IMR-90 (cell line): ENCODE measurements at regions of chr9 and their contacts with region 1.

Region 1: GRCh38 chr9:94922098-94922607 is 195.7 kb downstream of the AOPEP start:
- DNase-seq: peak; percentile 98
- ATAC-seq: peak; percentile 71
- H3K4me3 ChIP-seq: no peak overlapping the region
- H3K27ac ChIP-seq: peak overlapping the region; percentile 97
- H3K4me1 ChIP-seq: peaks cover 30% of the 10 kb centered on the region
- H3K27me3 ChIP-seq: no peaks in the 10 kb centered on the region
- CTCF ChIP-seq: no peak
- POLR2A ChIP-seq: no peak; the same call in 1 of the 2 replicates
- RAD21 ChIP-seq: peak; percentile 40

Region 2: GRCh38 chr9:94783102-94783664 is 139.0 kb before region 1 on chr9:
- CTCF ChIA-PET with region 1: interaction called, 3 read pairs
- POLR2A ChIA-PET with region 1: interaction called, 3 read pairs
- dilution Hi-C with region 1: no loop called
- in situ Hi-C with region 1: no loop called
- intact Hi-C with region 1: loop called (anchors 2 kb)
- DNase-seq: peak; percentile 87
- ATAC-seq: peak; percentile 92
- H3K4me3 ChIP-seq: no peak overlapping the region
- H3K27ac ChIP-seq: peak overlapping the region; percentile 67
- H3K4me1 ChIP-seq: peaks cover 9% of the 10 kb centered on the region
- H3K27me3 ChIP-seq: no peaks in the 10 kb centered on the region
- CTCF ChIP-seq: peak; percentile 77
- POLR2A ChIP-seq: peak; percentile 54; the same call in 1 of the 2 replicates
- RAD21 ChIP-seq: peak; percentile 90

Region 3: DNA sequence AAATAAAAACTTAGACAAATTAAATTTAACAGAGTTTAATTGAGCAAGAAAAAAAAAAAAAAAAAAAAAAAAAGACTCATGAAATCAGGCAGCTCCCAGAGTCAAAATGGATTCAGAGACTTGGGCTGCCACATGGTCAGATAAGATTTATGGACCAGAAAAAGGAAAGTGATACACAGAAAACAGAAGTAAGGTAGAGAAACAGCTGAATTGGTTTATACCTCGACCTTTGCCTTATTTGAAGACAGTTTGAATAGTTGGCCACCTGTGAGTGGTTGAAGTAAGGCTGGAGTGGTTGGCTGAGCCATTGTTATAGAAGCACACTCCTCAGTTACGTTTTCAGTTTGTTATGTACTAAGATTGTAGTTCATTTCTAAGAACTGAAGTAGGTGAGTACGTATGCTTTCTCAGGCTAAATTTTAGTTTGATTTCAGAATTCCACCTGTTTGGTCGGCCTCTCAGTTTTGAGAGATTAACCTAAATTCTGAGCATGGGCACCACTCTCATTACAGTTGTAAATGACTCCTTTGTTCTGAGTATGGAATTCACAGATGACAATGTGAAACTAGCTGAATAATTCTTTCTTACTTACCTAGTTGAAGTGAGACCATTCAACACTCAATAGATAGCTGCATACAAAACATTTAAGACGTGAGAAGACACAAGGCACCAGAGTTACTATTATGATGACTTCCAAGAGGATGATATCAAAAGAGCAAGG is 46.7 kb before region 1 on chr9:
- CTCF ChIA-PET with region 1: interaction called, 3 read pairs
- POLR2A ChIA-PET with region 1: interaction called, 13 read pairs
- dilution Hi-C with region 1: no loop called
- in situ Hi-C with region 1: no loop called
- intact Hi-C with region 1: no loop called
- DNase-seq: no peak
- ATAC-seq: no peak
- H3K4me3 ChIP-seq: no peak overlapping the region
- H3K27ac ChIP-seq: no peak overlapping the region
- H3K4me1 ChIP-seq: no peaks in the 10 kb centered on the region; the same call in 1 of the 2 replicates
- H3K27me3 ChIP-seq: no peaks in the 10 kb centered on the region
- CTCF ChIP-seq: no peak
- POLR2A ChIP-seq: no peak
- RAD21 ChIP-seq: no peak

Region 4: GRCh38 chr9:94945197-94946144 is 23.3 kb after region 1 on chr9:
- CTCF ChIA-PET with region 1: no interaction called
- POLR2A ChIA-PET with region 1: no interaction called
- dilution Hi-C with region 1: no loop called
- in situ Hi-C with region 1: no loop called
- intact Hi-C with region 1: loop called (anchors 2 kb)
- DNase-seq: peak; percentile 96
- ATAC-seq: peak; percentile 84
- H3K4me3 ChIP-seq: no peak overlapping the region
- H3K27ac ChIP-seq: peak overlapping the region; percentile 73
- H3K4me1 ChIP-seq: peaks cover 22% of the 10 kb centered on the region
- H3K27me3 ChIP-seq: no peaks in the 10 kb centered on the region
- CTCF ChIP-seq: no peak
- POLR2A ChIP-seq: no peak
- RAD21 ChIP-seq: no peak; the same call in 1 of the 2 replicates

Region 5: GRCh38 chr9:95004411-95005277 is 82.5 kb after region 1 on chr9:
- CTCF ChIA-PET with region 1: no interaction called
- POLR2A ChIA-PET with region 1: interaction called, 7 read pairs
- dilution Hi-C with region 1: no loop called
- in situ Hi-C with region 1: no loop called
- intact Hi-C with region 1: loop called (anchors 1 kb)
- DNase-seq: no peak
- ATAC-seq: peak; percentile 70
- H3K4me3 ChIP-seq: peak overlapping the region; percentile 92
- H3K27ac ChIP-seq: peak overlapping the region; percentile 99
- H3K4me1 ChIP-seq: peaks cover 3% of the 10 kb centered on the region; the same call in 1 of the 2 replicates
- H3K27me3 ChIP-seq: no peaks in the 10 kb centered on the region
- CTCF ChIP-seq: no peak
- POLR2A ChIP-seq: no peak; the same call in none of the 2 replicates
- RAD21 ChIP-seq: no peak

Region 6: GRCh38 chr9:95127249-95128176 is 205.4 kb after region 1 on chr9:
- CTCF ChIA-PET with region 1: no interaction called
- POLR2A ChIA-PET with region 1: no interaction called
- dilution Hi-C with region 1: no loop called
- in situ Hi-C with region 1: no loop called
- intact Hi-C with region 1: loop called (anchors 10 kb)
- DNase-seq: peak; percentile 71
- ATAC-seq: peak; percentile 99
- H3K4me3 ChIP-seq: peak overlapping the region; percentile 27; the same call in 1 of the 2 replicates
- H3K27ac ChIP-seq: no peak overlapping the region
- H3K4me1 ChIP-seq: peaks cover 2% of the 10 kb centered on the region; the same call in 1 of the 2 replicates
- H3K27me3 ChIP-seq: no peaks in the 10 kb centered on the region
- CTCF ChIP-seq: peak; percentile 99
- POLR2A ChIP-seq: no peak
- RAD21 ChIP-seq: peak; percentile 87